Calu3 (cell line): ENCODE measurements at regions of chr22 and their contacts with region 1.

Region 1: DNA sequence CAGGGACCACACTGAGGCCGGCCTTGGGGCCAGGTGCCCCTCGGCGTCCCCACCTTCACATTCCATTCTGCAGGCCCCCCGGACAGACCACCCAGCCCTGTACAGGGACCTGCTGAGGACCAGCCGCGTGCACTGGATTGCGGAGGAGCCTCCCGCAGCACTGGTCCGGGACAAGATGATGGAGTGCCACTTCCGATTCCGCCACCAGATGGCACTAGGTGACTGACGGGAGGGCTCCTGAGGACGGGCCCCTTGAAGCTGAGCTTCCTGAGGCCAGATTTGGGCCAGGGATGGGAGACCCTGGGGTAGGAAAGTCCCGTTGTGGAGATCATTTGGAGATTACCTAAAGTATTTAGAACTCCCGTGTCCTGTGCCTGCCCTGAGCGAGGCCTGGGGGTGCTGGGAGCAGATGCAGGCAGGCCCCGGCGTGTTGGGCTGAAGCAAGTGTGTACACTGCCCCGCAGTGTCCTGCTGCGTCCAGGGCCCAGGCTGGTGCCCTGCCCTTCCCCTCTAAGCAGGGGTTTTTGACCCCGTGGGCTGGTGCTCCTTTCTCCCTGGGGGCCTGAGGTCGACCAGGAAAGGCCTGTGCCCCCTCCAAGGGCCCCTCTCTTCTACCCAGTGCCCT is 20.0 kb downstream of the TRMU start:
- DNase-seq: peak; percentile 79
- H3K4me3 Mint-ChIP-seq: no peak overlapping the region
- H3K27ac Mint-ChIP-seq: peak overlapping the region; percentile 81
- H3K4me1 Mint-ChIP-seq: peaks cover 8% of the 10 kb centered on the region
- H3K27me3 Mint-ChIP-seq: no peaks in the 10 kb centered on the region
- CTCF ChIP-seq: peak; percentile 84

Region 2: GRCh38 chr22:46377566-46378425 is 22.3 kb after region 1 on chr22:
- CTCF ChIA-PET with region 1: interaction called, 13 read pairs
- intact Hi-C with region 1: no loop called
- DNase-seq: peak; percentile 94
- H3K4me3 Mint-ChIP-seq: peak overlapping the region; percentile 47
- H3K27ac Mint-ChIP-seq: peak overlapping the region; percentile 89
- H3K4me1 Mint-ChIP-seq: peaks cover 75% of the 10 kb centered on the region
- H3K27me3 Mint-ChIP-seq: no peaks in the 10 kb centered on the region
- CTCF ChIP-seq: no peak

Region 3: GRCh38 chr22:46390652-46391301 is 35.3 kb after region 1 on chr22:
- CTCF ChIA-PET with region 1: interaction called, 7 read pairs
- intact Hi-C with region 1: loop called (anchors 5 kb)
- DNase-seq: peak; percentile 73
- H3K4me3 Mint-ChIP-seq: peak overlapping the region; percentile 53
- H3K27ac Mint-ChIP-seq: peak overlapping the region; percentile 82
- H3K4me1 Mint-ChIP-seq: peaks cover 19% of the 10 kb centered on the region
- H3K27me3 Mint-ChIP-seq: no peaks in the 10 kb centered on the region
- CTCF ChIP-seq: peak; percentile 73